Prostate gland (tissue), 2 donors: ENCODE measurements at regions of chr19 and their contacts with region 1.

Region 1: GRCh38 chr19:50025024-50025789 is at the start of gene VRK3:
- DNase-seq: peak; percentile 99
- H3K4me3 ChIP-seq: peak within 1 kb of the TSS; percentile 85 to 91
- H3K27ac ChIP-seq: peak within 1 kb of the TSS; percentile 88 to 89
- H3K4me1 ChIP-seq: peaks cover 15% of the 10 kb centered on the region
- H3K27me3 ChIP-seq: no peaks in the 10 kb centered on the region
- CTCF ChIP-seq: peak in 2 of 4 experiments; percentile 31 to 36
- POLR2A ChIP-seq: peak; percentile 71
- total RNA-seq, gene VRK3: 47.8 to 76.5 TPM

Region 2: DNA sequence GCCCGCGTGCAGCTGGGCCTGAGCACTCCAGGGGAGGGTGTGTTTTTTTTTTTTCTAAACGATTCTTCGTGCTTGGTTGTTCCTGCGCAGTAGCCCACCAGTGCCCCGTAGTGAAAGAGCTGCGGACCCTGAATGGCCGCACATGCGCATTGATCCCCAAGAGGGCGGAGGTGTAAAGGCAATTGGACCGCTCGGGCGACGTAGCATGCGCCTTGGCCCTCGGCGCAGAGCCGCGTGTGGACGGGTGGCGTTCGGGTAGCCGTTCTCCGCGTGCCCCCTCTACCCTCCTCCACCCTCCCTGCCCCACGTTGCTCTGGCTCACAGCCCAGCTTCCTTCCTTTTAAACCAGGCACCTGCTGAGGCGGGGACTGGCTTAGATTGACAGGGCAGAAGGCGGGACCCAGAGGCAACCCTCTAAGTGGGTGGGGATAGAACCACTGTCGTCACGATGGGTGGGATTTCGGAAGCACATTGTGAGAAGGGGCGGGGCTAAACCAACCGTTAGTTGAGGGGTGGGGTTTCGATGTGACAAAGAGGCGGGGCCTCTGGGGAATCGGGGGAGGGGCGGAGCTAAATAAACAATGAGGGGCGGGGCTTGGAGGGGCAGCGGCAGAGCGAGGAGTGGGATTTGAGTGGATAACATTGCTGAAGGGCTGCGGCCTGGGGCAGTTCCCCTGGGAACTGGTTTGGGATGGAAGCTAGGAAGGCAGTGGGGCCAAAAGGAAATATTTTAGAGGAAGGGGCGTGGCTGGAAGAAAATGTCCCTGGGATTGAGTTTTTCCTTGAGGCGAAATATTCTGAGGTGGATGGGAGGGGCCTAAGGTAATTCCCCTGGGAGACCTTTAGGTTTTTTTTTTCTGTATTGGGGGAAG is 95.4 kb before region 1 on chr19:
- intact Hi-C with region 1: loop called (anchors 10 kb)
- DNase-seq: peak; percentile 85
- H3K4me3 ChIP-seq: peak overlapping the region; percentile 85 to 92
- H3K27ac ChIP-seq: peak overlapping the region; percentile 91 to 92
- H3K4me1 ChIP-seq: peaks cover 12% of the 10 kb centered on the region
- H3K27me3 ChIP-seq: no peaks in the 10 kb centered on the region
- CTCF ChIP-seq: peak in 2 of 4 experiments; percentile 16 to 33
- POLR2A ChIP-seq: peak; percentile 38

Region 3: DNA sequence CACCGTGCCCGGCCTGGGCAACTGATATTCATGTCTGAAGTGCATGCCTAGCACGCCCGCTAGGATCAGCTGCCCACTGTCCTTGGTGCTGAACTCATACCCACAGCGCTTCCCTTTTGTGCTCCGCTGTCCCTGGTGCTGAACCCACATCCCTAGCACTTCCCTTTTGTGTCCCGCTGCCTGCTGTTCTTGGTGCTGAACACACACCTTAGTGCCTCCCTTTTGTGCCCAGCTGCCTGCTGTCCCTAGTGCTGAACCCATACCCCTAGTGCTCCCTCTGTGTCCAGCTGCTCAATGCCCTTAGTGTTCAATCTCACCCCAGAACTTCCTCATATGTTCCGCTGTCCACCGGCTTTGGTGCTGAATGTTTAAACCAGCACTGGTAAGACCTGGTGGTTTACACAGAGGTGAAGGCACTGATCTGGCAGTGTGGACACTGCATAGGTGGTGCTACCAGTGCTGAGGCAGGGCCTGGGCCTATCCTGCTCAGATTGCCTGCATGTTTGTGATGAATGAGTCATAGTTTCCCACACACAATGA is 38.0 kb before region 1 on chr19:
- intact Hi-C with region 1: no loop called
- DNase-seq: peak; percentile 79
- H3K4me3 ChIP-seq: no peak overlapping the region
- H3K27ac ChIP-seq: no peak overlapping the region
- H3K4me1 ChIP-seq: no peaks in the 10 kb centered on the region
- H3K27me3 ChIP-seq: no peaks in the 10 kb centered on the region
- CTCF ChIP-seq: peak in 2 of 4 experiments; percentile 36 to 49
- POLR2A ChIP-seq: no peak

Region 4: DNA sequence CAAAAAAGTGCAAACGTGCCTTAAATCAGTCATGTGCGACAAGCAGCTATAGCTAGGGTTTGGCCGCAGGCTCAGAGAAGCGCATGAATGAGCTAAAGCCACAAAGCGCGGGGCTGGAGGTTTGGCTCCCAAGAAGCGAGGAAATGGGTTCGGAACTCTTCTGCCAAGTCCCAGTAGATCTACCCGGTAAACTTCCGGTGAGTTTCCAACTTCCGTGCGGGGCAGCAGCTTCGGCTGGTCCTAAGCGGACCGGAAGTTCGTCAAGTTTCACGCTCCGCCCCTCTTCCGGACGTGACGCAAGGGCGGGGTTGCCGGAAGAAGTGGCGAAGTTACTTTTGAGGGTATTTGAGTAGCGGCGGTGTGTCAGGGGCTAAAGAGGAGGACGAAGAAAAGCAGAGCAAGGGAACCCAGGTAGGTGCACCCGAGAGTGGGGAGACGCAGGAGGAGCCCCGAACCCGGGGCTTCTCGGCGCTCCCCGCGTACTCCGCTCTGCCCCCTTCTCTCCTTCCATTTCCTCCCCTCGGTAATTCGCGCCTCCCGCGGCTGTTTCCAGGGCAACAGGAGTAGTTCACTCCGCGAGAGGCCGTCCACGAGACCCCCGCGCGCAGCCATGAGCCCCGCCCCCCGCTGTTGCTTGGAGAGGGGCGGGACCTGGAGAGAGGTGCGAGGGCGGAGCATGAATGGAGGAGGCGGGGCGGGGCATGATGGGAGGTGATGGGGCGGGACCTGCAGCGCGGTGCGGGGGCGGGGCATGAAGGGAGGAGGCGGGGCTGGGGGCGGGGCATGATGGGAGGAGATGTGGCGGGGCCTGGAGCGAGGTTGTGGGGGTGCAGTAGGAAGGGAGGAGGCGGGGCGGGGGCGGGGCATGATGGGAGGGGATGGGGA is 351.2 kb after region 1 on chr19 and contains the start of gene NR1H2:
- intact Hi-C with region 1: loop called (anchors 10 kb)
- DNase-seq: peak; percentile 97
- H3K4me3 ChIP-seq: peak within 1 kb of the TSS; percentile 61 to 88
- H3K27ac ChIP-seq: peak within 1 kb of the TSS; percentile 95 to 98
- H3K4me1 ChIP-seq: no peaks in the 10 kb centered on the region
- H3K27me3 ChIP-seq: no peaks in the 10 kb centered on the region
- CTCF ChIP-seq: peak in 1 of 4 experiments; percentile 16
- POLR2A ChIP-seq: peak; percentile 73
- total RNA-seq, gene NR1H2: 110 to 129 TPM